Naive thymus-derived CD4-positive, alpha-beta T cell (primary cell): ENCODE measurements at regions of chr9 and their contacts with region 1.

Region 1: DNA sequence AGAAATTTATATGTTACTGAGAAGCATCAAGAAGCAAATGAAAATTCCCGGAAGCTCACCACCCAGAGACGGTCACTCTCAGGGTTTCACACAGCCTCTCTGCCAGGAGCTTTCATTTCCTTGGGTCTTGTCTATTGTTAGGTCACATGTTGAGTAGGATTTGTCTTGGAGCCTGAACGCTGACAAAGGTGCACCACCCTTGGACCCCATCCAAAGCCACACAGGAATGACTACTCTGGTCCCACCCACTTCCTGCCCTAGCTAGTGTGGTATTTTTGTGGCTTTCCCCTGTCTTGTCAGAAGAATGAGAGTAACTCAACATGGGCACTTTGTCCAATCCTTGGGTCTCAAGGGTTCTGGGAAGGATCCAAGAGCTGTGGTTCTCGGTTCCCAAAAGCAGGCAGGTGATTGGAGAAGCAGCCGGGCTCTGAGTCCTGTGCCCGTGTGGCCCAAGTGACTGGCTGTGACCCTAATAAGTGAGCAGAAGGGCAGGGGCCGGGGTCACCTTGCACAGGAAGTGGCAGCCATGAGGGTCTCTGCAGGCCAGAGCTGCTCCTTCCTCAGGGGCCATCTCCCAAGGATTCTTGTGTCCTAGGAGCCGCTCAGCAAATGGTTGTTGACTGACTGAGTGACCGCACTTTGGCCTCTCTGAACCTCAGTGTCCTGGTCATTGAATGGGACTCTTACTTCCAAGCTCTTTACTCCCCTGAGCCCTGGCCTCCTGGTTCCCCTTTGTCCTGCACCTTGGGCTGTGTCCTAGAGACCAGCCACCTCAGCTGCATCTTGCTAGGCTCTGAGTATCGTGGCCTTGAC is 6.9 kb downstream of the FGD3 start:
- DNase-seq: peak in 8 of 9 donors; percentile 67 to 92 (median 90)
- ATAC-seq: peak; percentile 93
- H3K4me3 ChIP-seq: peak overlapping the region; percentile 55
- H3K4me3 Mint-ChIP-seq: peak overlapping the region; percentile 79 to 99 (median 86)
- H3K27ac ChIP-seq: peak overlapping the region; percentile 84
- H3K27ac Mint-ChIP-seq: peak overlapping the region; percentile 91 to 100 (median 98)
- H3K4me1 ChIP-seq: peaks cover 52 to 88% of the 10 kb centered on the region in 2 donors
- H3K4me1 Mint-ChIP-seq: peaks cover 58 to 92% (median 84%) of the 10 kb centered on the region in 7 donors
- H3K27me3 ChIP-seq: no peaks in the 10 kb centered on the region
- H3K27me3 Mint-ChIP-seq: peaks cover 0 to 2% (median 0%) of the 10 kb centered on the region in 5 donors

Region 2: DNA sequence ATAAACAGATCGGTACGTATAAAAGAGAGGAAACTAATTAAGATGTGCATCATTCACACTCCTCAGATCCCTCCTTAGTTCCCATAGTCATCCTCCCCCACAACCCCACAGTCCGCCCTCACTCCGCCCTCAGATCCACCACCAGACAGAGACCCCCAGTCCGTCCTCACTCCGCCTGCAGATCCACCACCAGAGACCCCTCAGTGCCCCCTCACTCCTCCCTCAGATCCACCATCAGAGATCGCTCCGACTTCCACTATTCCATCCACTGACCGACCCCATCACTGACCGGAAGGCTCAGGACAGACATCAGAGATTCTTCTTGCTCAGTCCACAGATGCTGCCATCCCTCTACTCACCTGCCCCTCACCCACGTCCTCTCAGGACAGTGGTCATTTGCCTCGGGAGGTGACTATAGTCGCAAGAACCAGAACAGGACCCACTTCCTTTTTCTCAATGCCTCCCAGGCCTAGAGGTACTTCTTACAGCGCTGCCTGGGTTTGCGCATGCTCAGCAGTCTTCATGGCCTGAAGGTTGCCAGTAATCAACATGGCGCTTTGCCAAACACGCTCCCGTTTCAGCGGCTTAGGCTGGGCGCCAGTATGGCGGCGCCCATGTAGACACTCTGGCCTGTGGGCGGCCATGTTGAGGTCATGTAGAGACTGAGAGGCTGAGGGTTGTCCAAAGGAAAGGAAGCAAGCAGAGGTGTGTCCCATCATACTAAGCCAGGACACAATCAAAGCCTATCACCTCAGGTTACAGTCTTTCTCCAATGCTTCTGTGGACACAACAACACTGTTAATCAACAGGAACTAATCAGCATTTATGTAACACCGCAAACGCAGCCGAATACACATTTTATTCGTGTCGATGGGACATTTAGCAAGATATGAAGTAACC is 76.5 kb before region 1 on chr9 and contains the start of gene ZNF484:
- CTCF ChIA-PET with region 1: no interaction called
- POLR2A ChIA-PET with region 1: interaction called, 7 read pairs
- intact Hi-C with region 1: loop called in 1 of 2 experiments (anchors 1 kb)
- DNase-seq: peak; percentile 86 to 97 (median 94)
- ATAC-seq: peak; percentile 99
- H3K4me3 ChIP-seq: peak within 1 kb of the TSS; percentile 77
- H3K4me3 Mint-ChIP-seq: peak within 1 kb of the TSS; percentile 91 to 100 (median 99)
- H3K27ac ChIP-seq: peak within 1 kb of the TSS; percentile 90
- H3K27ac Mint-ChIP-seq: peak within 1 kb of the TSS; percentile 94 to 100 (median 99)
- H3K4me1 ChIP-seq: peaks cover 0 to 15% of the 10 kb centered on the region in 2 donors
- H3K4me1 Mint-ChIP-seq: peaks cover 28 to 69% (median 58%) of the 10 kb centered on the region in 7 donors
- H3K27me3 ChIP-seq: no peaks in the 10 kb centered on the region
- H3K27me3 Mint-ChIP-seq: no peaks in the 10 kb centered on the region
- total RNA-seq, gene ZNF484: 12.4 to 25.4 (median 14.0) TPM

Region 3: DNA sequence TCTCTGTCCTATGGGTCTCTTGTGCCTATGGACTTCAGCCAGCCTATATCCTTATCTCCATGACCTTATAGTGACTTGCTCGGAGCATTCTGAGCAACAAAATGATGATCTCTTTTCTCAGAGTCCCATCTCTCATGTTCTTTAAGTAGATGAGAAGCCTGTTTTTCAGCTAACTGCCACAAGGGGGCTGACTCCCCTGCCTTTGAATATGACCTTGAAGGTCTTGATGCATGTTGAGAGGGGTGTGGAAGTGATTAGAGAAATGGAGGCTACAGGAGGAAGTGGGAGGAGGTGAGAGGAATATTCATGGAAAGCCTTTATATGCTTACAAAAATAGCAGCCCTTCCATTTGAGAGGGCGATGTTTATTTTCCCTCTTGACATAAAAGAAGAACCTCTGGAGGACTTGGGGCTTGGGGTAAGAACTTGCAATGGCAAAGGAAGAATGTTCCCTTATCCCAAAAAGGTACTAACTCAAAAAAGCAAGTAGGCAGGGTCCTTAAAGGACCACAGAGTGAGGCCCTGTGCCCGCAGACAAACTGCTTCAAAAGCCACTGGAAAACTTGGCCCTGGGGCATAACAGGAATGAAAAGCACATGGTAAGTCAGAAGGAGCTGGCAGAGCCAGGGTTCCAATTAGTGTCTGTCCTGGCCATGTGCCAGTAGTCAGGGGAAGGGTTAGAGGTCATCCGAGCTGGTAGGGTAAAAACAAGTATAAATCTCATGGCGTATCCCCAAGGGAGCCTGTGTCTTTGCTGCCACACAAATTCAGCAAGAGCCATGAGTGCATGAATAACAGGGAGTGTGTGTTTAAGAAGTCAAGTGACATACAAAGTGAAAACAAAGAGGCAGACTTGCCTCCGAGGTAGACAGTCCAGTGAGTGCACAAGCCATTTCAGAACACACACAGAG is 32.2 kb after region 1 on chr9:
- CTCF ChIA-PET with region 1: interaction called, 4 read pairs
- POLR2A ChIA-PET with region 1: no interaction called
- intact Hi-C with region 1: loop called in 1 of 2 experiments (anchors 1 kb)
- DNase-seq: peak in 7 of 9 donors; percentile 52 to 66 (median 57)
- ATAC-seq: peak; percentile 75
- H3K4me3 ChIP-seq: no peak overlapping the region
- H3K4me3 Mint-ChIP-seq: peak overlapping the region; percentile 34 to 71 (median 62)
- H3K27ac ChIP-seq: peak overlapping the region; percentile 59
- H3K27ac Mint-ChIP-seq: peak overlapping the region; percentile 56 to 95 (median 86)
- H3K4me1 ChIP-seq: peaks cover 65 to 71% of the 10 kb centered on the region in 2 donors
- H3K4me1 Mint-ChIP-seq: peaks cover 66 to 93% (median 89%) of the 10 kb centered on the region in 7 donors
- H3K27me3 ChIP-seq: no peaks in the 10 kb centered on the region
- H3K27me3 Mint-ChIP-seq: no peaks in the 10 kb centered on the region

Region 4: DNA sequence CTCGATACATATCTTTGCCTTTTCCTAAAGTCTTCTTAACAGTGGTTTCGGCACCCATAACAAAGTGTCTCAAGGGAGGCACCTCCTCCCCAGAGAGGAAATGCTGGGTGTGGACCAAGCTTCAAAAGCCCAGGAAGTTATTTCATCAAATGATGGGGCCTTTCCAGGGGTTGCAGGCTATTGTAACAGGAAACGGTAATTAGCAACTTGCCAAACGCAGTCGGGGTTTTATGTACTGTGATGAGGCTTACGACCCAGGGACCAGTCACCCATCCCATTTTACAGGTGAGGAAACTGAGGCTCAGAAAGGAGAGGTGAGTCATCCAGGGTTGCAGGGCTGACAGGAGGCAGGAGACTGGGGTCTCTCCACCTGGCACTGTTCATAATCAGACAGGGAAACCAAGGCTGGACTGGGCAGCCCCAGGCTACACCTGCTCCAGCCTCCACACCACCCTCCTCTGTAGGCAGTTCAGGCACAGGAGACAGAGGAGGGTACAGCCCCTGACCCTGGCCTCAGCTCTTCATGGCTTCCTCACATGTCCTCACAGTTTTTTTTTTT is 74.3 kb after region 1 on chr9:
- CTCF ChIA-PET with region 1: interaction called, 8 read pairs
- POLR2A ChIA-PET with region 1: interaction called, 19 read pairs
- intact Hi-C with region 1: loop called (anchors 1 to 2 kb)
- DNase-seq: peak; percentile 38 to 94 (median 91)
- ATAC-seq: peak; percentile 93
- H3K4me3 ChIP-seq: peak overlapping the region; percentile 49
- H3K4me3 Mint-ChIP-seq: peak overlapping the region; percentile 80 to 91 (median 88)
- H3K27ac ChIP-seq: peak overlapping the region; percentile 90
- H3K27ac Mint-ChIP-seq: peak overlapping the region; percentile 96 to 100 (median 99)
- H3K4me1 ChIP-seq: peaks cover 62 to 93% of the 10 kb centered on the region in 2 donors
- H3K4me1 Mint-ChIP-seq: peaks cover 54 to 93% (median 82%) of the 10 kb centered on the region in 7 donors
- H3K27me3 ChIP-seq: no peaks in the 10 kb centered on the region
- H3K27me3 Mint-ChIP-seq: no peaks in the 10 kb centered on the region

Region 5: DNA sequence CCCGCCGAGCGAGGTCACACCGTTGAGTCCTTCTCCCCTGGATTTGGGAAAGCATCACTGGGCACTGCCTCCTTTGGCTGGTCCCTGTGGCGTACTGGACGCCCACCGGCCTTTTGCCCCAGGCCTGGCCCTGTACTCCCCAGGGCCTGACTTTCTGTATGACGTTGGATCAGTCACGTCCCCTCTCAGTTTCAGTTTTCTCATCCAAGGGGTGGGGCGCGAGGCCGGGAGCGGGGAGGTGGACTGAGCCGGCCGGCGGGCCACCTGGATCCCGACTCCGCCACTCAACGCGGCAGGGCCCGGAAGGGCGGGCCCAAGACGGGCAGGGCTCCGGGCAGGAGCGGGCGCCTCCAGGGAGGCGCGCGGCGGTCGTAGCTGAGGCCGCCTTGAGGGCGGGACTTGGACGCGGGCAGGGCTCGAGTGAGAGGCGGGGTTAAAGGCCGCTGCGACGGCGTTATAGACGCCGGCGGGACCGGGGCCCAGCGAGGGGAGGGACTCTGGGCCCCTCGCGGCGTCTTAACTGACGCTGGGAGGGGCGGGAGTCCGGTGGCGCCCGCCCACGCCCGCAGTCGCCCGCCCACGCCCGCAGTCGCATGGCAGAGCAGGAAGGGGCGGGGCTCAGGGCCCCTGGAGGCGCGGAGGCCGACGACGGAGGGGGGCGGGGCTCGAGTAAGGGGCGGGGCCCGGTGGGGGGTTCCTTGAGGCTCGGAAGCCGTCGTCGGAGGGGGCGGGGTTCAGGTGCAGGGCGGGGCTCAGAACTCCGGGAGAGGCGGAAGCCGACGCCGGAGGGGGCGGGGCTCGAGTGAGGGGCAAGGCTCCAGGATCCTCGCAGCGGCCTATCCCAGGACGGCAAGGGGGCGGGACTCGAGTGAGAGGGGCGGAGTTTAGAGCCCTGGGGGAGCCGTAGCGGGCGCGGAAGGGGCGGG is 141.2 kb after region 1 on chr9:
- CTCF ChIA-PET with region 1: interaction called, 3 read pairs
- POLR2A ChIA-PET with region 1: interaction called, 3 read pairs
- intact Hi-C with region 1: loop called (anchors 2 kb)
- DNase-seq: peak; percentile 99 to 100 (median 100)
- ATAC-seq: peak; percentile 88
- H3K4me3 ChIP-seq: peak overlapping the region; percentile 72
- H3K4me3 Mint-ChIP-seq: peak overlapping the region; percentile 83 to 95 (median 90)
- H3K27ac ChIP-seq: peak overlapping the region; percentile 93
- H3K27ac Mint-ChIP-seq: peak overlapping the region; percentile 93 to 99 (median 96)
- H3K4me1 ChIP-seq: peaks cover 41 to 58% of the 10 kb centered on the region in 2 donors
- H3K4me1 Mint-ChIP-seq: peaks cover 49 to 81% (median 71%) of the 10 kb centered on the region in 7 donors
- H3K27me3 ChIP-seq: no peaks in the 10 kb centered on the region
- H3K27me3 Mint-ChIP-seq: no peaks in the 10 kb centered on the region

Region 6: DNA sequence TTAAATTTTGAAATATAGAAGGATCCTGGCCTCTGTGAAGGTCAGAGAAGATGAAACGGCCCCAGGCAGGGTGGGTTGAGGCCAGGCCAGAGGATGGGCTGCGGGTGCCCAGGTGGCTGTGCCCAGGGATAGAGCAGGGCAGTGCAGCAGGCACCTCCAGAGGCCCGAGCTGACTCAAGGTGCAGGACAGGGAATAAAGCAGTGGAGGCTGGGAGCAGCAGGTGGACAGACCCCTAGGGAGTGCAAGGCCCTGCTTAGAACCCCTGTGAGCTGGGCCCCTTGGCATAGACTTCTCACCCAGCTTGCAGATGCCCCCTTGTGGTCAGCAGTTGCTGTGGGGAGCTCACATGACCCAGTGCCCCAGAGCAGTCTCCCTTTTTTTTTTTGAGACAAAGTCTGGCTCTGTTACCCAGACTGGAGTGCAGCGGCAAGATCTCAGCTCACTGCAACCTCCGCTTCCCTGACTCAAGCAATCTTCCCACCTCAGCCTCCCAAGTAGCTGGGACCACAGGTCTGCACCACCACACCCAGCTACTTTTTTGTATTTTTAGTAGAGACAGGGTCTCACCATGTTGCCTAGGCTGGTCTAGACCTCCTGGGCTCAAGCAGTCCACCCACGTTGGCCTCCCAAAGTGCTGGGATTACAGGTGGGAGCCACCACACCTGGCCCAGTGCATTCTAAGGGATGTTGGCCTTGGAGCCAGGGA is 348.4 kb after region 1 on chr9:
- CTCF ChIA-PET with region 1: interaction called, 5 read pairs
- POLR2A ChIA-PET with region 1: no interaction called
- intact Hi-C with region 1: loop called (anchors 1 to 2 kb)
- DNase-seq: peak in 8 of 9 donors; percentile 39 to 76 (median 66)
- ATAC-seq: peak; percentile 82
- H3K4me3 ChIP-seq: no peak overlapping the region
- H3K4me3 Mint-ChIP-seq: no peak overlapping the region
- H3K27ac ChIP-seq: no peak overlapping the region
- H3K27ac Mint-ChIP-seq: peak overlapping the region in 1 of 9 donors; percentile 36
- H3K4me1 ChIP-seq: no peaks in the 10 kb centered on the region
- H3K4me1 Mint-ChIP-seq: peaks cover 0 to 13% (median 5%) of the 10 kb centered on the region in 7 donors
- H3K27me3 ChIP-seq: no peaks in the 10 kb centered on the region
- H3K27me3 Mint-ChIP-seq: peaks cover 0 to 3% (median 0%) of the 10 kb centered on the region in 5 donors

Region 7: DNA sequence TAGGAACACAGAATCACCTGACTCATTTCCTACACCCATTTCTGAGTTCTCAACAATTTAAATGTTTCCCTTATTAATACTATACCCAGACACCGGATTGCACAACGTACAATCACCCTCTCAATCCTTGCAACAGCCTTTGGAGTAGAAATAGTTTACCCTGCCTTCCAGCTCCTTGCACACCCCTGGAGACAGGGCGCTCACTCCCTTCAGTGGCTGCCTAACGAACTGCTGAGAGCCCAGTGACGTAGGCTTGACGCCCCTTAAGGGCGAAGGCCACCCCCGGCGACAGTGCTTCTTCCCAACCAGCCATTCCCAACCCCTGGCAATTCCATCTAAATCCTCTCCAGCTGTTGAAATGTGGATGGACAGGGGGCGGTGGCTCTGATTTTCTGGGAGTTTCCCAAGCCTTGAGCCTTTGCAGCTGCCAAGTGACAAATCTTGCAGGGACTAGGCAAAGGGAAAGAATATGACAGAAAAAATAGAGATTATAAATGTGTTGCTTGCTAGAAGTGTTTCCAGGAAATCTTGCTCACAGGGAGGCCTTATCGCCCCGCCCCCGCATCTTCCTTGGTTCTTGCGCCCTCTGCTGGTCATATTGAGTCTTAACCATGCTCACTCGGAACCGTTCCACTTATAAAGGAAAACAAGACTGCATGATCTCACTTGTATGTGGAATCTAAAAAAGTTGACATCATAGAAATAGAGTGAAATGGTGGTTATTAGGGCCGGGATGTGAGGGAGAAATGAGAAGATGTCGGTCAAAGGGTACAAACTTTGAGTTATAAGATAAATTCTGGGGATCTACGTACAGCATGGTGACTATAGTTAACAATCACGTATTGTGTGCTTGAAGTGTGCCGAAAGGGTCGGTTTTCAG is 1008.5 kb after region 1 on chr9:
- CTCF ChIA-PET with region 1: no interaction called
- POLR2A ChIA-PET with region 1: no interaction called
- intact Hi-C with region 1: loop called in 1 of 2 experiments (anchors 10 kb)
- DNase-seq: peak; percentile 64 to 83 (median 78)
- ATAC-seq: peak; percentile 90
- H3K4me3 ChIP-seq: no peak overlapping the region
- H3K4me3 Mint-ChIP-seq: peak overlapping the region in 6 of 10 donors; percentile 0 to 35 (median 2)
- H3K27ac ChIP-seq: no peak overlapping the region
- H3K27ac Mint-ChIP-seq: no peak overlapping the region
- H3K4me1 ChIP-seq: peaks cover 9 to 20% of the 10 kb centered on the region in 2 donors
- H3K4me1 Mint-ChIP-seq: peaks cover 26 to 44% (median 28%) of the 10 kb centered on the region in 7 donors
- H3K27me3 ChIP-seq: peaks cover 0 to 25% of the 10 kb centered on the region in 2 donors
- H3K27me3 Mint-ChIP-seq: peaks cover 45 to 67% (median 55%) of the 10 kb centered on the region in 5 donors

Region 8: GRCh38 chr9:94245651-94246050 is 1291.4 kb after region 1 on chr9:
- CTCF ChIA-PET with region 1: no interaction called
- POLR2A ChIA-PET with region 1: no interaction called
- intact Hi-C with region 1: no loop called
- DNase-seq: no peak
- ATAC-seq: no peak
- H3K4me3 ChIP-seq: no peak overlapping the region
- H3K4me3 Mint-ChIP-seq: no peak overlapping the region
- H3K27ac ChIP-seq: no peak overlapping the region
- H3K27ac Mint-ChIP-seq: peak overlapping the region in 1 of 9 donors; percentile 9
- H3K4me1 ChIP-seq: peaks cover 2 to 6% of the 10 kb centered on the region in 2 donors
- H3K4me1 Mint-ChIP-seq: peaks cover 3 to 11% (median 8%) of the 10 kb centered on the region in 7 donors
- H3K27me3 ChIP-seq: no peaks in the 10 kb centered on the region
- H3K27me3 Mint-ChIP-seq: peaks cover 4 to 14% (median 9%) of the 10 kb centered on the region in 5 donors